Activated CD4-positive, alpha-beta T cell treated with anti-CD3 and anti-CD28 coated beads, Interleukin-2, amount 10 ng/mL, durations not matched to agents 24 days and 14 days (primary cell): ENCODE measurements at regions of chr6 and their contacts with region 1.

Region 1: DNA sequence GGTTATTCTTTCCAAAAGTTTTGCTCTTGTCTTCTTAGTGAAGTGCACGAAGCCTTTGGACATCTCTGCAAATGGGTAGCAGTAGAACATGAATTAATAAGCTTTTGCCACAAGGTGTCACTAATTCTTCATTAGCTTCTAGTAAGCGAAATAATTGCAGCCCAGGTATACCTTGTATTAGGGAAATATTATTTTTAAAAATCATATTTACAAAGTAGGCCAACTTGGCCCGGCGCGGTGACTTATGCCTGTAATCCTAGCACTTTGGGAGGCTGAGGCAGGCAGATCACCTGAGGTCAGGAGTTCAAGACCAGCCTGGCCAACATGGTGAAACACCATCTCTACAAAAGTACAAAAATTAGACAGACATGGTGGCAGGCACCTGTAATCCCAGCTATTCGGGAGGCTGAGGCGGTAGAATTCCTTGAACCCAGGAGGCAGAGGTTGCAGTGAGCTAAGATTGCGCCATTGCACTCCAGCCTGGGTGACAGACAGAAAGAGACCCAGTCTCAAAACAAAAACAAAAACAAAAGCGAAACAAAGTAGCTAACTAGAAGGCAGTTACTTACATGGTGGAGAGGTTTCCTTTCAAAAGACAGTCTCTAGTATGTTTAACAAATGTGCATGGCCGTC is 8.8 kb upstream of the RSPH3 start:
- DNase-seq: peak; percentile 71
- H3K4me3 Mint-ChIP-seq: peak overlapping the region; percentile 16
- H3K27ac Mint-ChIP-seq: peak overlapping the region; percentile 34
- H3K4me1 Mint-ChIP-seq: peaks cover 29% of the 10 kb centered on the region
- H3K27me3 Mint-ChIP-seq: no peaks in the 10 kb centered on the region

Region 2: GRCh38 chr6:158972241-158973233 is 36.2 kb before region 1 on chr6:
- intact Hi-C with region 1: no loop called
- DNase-seq: peak; percentile 63
- H3K4me3 Mint-ChIP-seq: no peak overlapping the region
- H3K27ac Mint-ChIP-seq: no peak overlapping the region
- H3K4me1 Mint-ChIP-seq: peaks cover 4% of the 10 kb centered on the region
- H3K27me3 Mint-ChIP-seq: peaks cover 2% of the 10 kb centered on the region

Region 3: DNA sequence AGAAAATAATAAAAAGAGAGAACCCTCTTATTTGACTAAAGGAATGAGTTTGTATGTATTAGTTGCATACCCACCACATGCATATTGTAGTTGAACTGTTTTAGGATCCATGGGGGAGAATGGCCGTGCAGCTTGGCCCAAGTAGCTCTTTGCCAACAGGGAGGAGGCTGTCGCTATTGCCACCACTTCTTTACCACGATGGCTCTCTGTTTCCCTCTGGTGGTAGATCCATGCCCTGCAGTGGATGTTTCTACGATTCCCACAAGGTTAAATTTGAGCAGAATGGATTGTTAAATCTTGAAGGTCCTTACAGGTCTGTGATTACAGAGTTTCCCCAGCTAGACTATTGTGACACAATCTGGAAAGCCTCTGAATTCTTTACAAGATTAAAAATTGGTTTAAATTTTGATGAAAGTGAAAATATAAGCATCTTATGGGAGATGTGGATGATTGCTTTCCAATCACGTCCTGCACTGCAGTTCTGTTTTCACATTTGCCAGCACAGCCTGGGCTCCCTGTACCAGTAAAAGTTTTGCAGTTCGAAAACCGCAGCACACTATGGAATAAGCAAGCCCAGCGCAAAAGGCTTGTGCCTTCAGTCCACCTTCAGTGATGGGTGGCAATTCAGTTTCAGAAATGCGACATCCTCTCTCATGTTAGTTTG is 126.1 kb after region 1 on chr6:
- intact Hi-C with region 1: loop called (anchors 1 kb)
- DNase-seq: peak; percentile 93
- H3K4me3 Mint-ChIP-seq: no peak overlapping the region
- H3K27ac Mint-ChIP-seq: no peak overlapping the region
- H3K4me1 Mint-ChIP-seq: peaks cover 6% of the 10 kb centered on the region
- H3K27me3 Mint-ChIP-seq: peaks cover 31% of the 10 kb centered on the region

Region 4: DNA sequence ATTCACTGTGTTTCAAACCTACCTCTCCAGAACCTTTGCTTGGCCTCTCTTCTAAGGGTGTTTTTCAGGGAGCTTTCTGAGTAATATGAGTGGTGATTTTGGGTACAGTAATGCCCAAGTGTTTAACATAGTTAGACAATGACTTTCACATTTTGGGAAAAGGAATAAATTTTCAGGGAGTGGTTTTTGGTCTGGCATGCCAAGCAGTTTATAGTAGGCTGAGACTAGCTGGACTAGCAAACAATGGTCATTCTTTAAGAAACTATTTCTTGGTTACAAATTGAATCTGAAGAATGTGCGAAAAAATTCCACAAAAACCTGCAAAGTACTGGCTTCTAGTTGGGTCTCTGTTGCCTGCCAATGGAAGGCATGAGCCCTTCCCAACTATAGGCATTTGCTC is 175.8 kb after region 1 on chr6:
- intact Hi-C with region 1: no loop called
- DNase-seq: no peak
- H3K4me3 Mint-ChIP-seq: no peak overlapping the region
- H3K27ac Mint-ChIP-seq: no peak overlapping the region
- H3K4me1 Mint-ChIP-seq: peaks cover 10% of the 10 kb centered on the region
- H3K27me3 Mint-ChIP-seq: peaks cover 9% of the 10 kb centered on the region